ENCODE measurements at regions of chr7 and their contacts with region 1.

Region 1: GRCh38 chr7:33757562-33758165 is 147.7 kb upstream of the BMPER start:
- DNase-seq: no peak
- H3K4me3 Mint-ChIP-seq: no peak overlapping the region
- H3K27ac Mint-ChIP-seq: no peak overlapping the region
- H3K4me1 Mint-ChIP-seq: no peaks in the 10 kb centered on the region
- H3K27me3 Mint-ChIP-seq: no peaks in the 10 kb centered on the region

Region 2: GRCh38 chr7:32761451-32762205 is 996.0 kb before region 1 on chr7:
- intact Hi-C with region 1: loop called (anchors 10 kb)
- DNase-seq: no peak
- H3K4me3 Mint-ChIP-seq: no peak overlapping the region
- H3K27ac Mint-ChIP-seq: no peak overlapping the region
- H3K4me1 Mint-ChIP-seq: peaks cover 9% of the 10 kb centered on the region
- H3K27me3 Mint-ChIP-seq: peaks cover 65% of the 10 kb centered on the region

Region 3: GRCh38 chr7:33895025-33895804 is 137.6 kb after region 1 on chr7:
- intact Hi-C with region 1: loop called (anchors 5 kb)
- DNase-seq: peak; percentile 45
- H3K4me3 Mint-ChIP-seq: no peak overlapping the region
- H3K27ac Mint-ChIP-seq: no peak overlapping the region
- H3K4me1 Mint-ChIP-seq: no peaks in the 10 kb centered on the region
- H3K27me3 Mint-ChIP-seq: peaks cover 20% of the 10 kb centered on the region